ENCODE measurements at regions of chr5 and their contacts with region 1.

Region 1: GRCh38 chr5:14270209-14270702 is 127.1 kb downstream of the TRIO start:
- DNase-seq: peak; percentile 45
- ATAC-seq: peak; percentile 82 to 95

Region 2: GRCh38 chr5:13994621-13995253 is 275.5 kb before region 1 on chr5:
- intact Hi-C with region 1: loop called in 1 of 2 experiments (anchors 5 kb)
- DNase-seq: no peak
- ATAC-seq: no peak

Region 3: DNA sequence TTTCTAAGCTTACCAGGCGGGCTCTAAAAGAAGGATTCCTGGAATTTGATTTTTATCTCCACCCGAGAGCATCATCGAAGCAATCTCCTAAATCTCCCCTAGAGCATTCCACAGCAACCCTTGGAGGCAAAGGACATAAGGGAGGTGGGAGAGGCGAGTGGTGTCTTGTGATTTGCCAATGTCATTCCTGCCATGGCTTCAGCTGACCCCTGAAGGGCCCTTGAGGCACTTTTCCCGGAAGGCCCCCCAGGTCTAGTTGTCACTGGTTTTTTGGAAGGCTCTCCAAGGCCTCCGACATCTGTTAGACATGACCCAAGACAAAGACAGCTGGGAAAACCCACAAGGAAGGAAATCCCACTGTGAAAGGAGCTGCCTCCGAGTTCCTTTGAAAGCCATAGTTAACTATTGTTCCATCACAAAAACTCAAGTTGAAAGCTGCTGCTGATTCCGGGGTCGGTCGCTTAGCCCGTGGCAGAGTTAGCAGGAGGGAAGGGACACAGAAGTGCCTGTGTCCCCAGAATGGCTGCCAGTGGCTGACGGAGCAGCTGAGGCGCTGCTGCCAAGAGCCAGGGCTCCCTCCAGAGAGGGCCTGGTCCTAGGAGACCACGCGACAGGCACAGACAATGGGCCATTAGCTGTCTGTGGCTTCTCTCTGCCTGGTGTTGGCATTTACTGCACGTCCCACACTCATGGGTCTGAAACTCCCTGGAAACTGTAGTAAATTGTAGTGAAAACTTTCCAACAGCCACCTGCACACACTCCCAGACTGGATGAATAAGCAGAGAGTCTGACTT is 151.5 kb before region 1 on chr5:
- intact Hi-C with region 1: loop called in 1 of 2 experiments (anchors 10 kb)
- DNase-seq: no peak
- ATAC-seq: peak; percentile 77 to 79

Region 4: GRCh38 chr5:14131855-14132503 is 138.3 kb before region 1 on chr5:
- intact Hi-C with region 1: no loop called
- DNase-seq: no peak
- ATAC-seq: peak; percentile 59 to 77

Region 5: DNA sequence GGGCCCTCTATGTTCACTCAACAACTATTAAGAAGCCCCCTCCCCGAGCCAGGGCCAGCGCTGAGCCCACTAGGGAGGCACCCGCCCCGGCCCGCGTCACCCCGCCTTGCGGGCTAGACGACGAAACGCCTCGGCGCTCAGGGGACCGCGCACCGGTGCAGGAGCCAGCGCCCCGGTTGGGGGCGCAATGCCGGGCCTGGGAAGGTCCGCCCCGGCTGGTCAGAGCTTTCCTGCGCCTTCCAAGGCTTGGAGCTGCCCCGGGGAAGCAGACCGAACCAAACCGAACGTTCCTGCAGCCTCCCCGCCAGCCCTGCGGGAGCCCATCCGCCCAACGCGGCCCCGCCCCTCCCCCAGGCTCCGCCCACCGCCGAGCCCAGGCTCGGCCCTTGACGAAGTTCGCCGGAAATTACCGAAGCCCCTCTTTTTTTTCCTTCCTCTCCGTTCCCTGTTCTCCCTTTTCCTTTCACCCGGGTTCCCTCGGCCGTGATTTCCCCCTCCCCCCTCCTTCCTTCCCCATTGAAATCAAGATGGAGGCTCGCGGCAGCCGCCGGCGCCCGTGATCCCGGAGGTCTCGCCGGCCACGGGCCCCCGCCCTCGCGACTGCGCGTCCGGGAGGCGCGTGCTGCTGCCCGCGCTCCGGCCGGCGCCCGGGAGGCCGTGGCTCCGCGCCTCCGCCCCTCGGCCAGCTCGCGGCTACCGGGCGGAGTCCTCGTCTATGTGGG is 127.3 kb before region 1 on chr5 and contains the start of gene TRIO:
- intact Hi-C with region 1: loop called (anchors 5 to 10 kb)
- DNase-seq: peak; percentile 92
- ATAC-seq: peak; percentile 81 to 87
- total RNA-seq, gene TRIO: 50.4 to 60.8 TPM

Region 6: DNA sequence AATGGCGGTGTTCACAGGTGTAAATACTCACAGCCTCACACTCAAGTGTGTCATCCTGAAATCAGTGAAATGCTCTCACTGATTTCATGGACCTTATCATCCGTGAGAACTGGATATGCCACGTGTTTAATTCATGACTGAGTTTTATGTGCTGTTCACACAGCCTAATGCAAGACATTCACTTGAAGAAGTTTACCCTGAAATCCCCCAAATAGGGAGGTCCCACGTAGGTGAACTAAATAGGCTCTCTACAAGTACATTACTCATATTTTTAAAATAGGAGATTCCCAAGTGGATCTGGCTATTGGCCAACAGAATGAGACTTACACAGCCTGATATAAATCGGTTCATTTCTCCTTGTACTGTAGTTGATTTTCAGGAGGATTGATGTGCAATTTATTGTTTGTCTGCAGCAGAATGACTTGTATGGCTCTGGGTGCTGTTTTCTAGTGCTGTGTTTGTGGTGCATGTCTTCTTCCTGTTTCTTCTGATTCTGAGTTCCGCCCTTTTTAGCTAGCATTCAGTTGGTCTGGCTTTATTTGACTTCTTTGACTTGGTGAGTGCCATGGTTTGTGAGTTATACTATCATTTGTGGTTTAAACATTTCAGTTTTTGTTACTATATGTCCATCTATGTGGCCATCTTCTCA is 102.0 kb before region 1 on chr5:
- intact Hi-C with region 1: no loop called
- DNase-seq: no peak
- ATAC-seq: peak; percentile 22 to 47

Measured in left cardiac atrium (tissue), 4 donors.